CD4-positive, alpha-beta T cell (primary cell): ENCODE measurements at regions of chr2 and their contacts with region 1.

Region 1: GRCh38 chr2:197198890-197199289 is 111.7 kb downstream of the ANKRD44 start:
- DNase-seq: peak; percentile 75 to 98 (median 83)
- ATAC-seq: peak; percentile 82
- H3K4me3 ChIP-seq: peak overlapping the region; percentile 57
- H3K4me3 Mint-ChIP-seq: peak overlapping the region; percentile 89
- H3K27ac ChIP-seq: peak overlapping the region; percentile 77 to 84
- H3K27ac Mint-ChIP-seq: peak overlapping the region; percentile 98
- H3K4me1 ChIP-seq: peaks cover 70% of the 10 kb centered on the region
- H3K4me1 Mint-ChIP-seq: peaks cover 92% of the 10 kb centered on the region
- H3K27me3 ChIP-seq: no peaks in the 10 kb centered on the region
- H3K27me3 Mint-ChIP-seq: no peaks in the 10 kb centered on the region
- CTCF ChIP-seq: no peak

Region 2: DNA sequence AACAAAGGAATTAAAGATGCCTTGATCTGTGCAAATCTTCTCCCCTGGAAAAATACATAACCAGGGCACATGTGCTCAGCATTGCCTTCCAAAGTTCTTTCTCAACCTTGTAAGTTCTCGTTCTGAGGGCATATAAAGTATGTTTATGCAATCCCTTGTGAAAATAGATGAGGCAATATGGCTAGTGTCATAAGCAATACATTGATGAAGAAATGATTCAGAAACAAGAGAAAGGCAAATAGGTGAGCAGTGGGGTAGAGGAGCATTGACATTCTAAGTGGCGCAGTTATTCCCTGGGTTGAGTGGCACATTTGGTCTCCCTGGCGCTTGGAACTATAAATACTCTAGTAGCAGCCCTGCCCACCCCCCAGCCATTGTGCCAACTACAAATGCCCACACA is 215.0 kb before region 1 on chr2:
- CTCF ChIA-PET with region 1: no interaction called
- POLR2A ChIA-PET with region 1: no interaction called
- intact Hi-C with region 1: no loop called
- DNase-seq: peak in 2 of 14 experiments; percentile 24
- ATAC-seq: no peak
- H3K4me3 ChIP-seq: no peak overlapping the region
- H3K4me3 Mint-ChIP-seq: no peak overlapping the region
- H3K27ac ChIP-seq: no peak overlapping the region
- H3K27ac Mint-ChIP-seq: peak overlapping the region; percentile 47
- H3K4me1 ChIP-seq: peaks cover 3% of the 10 kb centered on the region
- H3K4me1 Mint-ChIP-seq: peaks cover 20% of the 10 kb centered on the region
- H3K27me3 ChIP-seq: no peaks in the 10 kb centered on the region
- H3K27me3 Mint-ChIP-seq: no peaks in the 10 kb centered on the region
- CTCF ChIP-seq: no peak

Region 3: GRCh38 chr2:197152451-197153228 is 46.2 kb before region 1 on chr2:
- CTCF ChIA-PET with region 1: interaction called, 4 read pairs
- POLR2A ChIA-PET with region 1: interaction called, 3 read pairs
- intact Hi-C with region 1: loop called in 1 of 2 experiments (anchors 5 kb)
- DNase-seq: peak in 9 of 14 experiments; percentile 16 to 66 (median 37)
- ATAC-seq: peak; percentile 93
- H3K4me3 ChIP-seq: no peak overlapping the region
- H3K4me3 Mint-ChIP-seq: peak overlapping the region; percentile 30
- H3K27ac ChIP-seq: peak overlapping the region; percentile 31 to 63
- H3K27ac Mint-ChIP-seq: peak overlapping the region; percentile 85
- H3K4me1 ChIP-seq: peaks cover 44% of the 10 kb centered on the region
- H3K4me1 Mint-ChIP-seq: peaks cover 85% of the 10 kb centered on the region
- H3K27me3 ChIP-seq: no peaks in the 10 kb centered on the region
- H3K27me3 Mint-ChIP-seq: no peaks in the 10 kb centered on the region
- CTCF ChIP-seq: peak; percentile 37

Region 4: DNA sequence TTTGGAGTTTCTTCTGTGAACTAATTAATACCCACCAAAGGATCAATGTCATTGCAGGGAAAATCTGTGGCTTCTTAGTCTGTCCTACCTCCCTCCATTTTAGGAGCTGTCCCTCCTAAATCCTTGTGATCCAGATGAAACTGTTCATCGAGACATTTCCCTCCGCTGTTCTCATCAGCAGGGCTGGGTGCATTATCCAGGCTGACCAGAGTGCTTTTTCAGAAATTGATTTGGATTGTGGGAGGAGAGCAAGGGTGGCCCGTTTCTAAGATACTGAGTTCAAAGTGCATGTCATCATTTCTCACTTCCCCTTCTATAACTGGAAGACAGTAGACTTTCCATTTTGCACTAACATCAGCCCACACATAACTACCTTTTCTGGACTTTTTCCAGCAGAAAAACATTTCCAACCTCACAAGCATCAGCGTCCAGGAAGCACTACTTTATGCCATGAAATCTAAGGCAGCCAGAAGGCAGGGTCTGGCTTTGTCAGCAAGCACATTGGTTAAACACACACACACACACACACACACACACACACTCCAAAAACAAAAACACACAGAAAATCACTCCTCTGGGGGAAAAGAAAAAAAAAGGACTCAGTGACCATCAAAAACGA is 17.6 kb after region 1 on chr2:
- CTCF ChIA-PET with region 1: interaction called, 3 read pairs
- POLR2A ChIA-PET with region 1: interaction called, 216 read pairs
- intact Hi-C with region 1: loop called (anchors 1 to 2 kb)
- DNase-seq: peak in 1 of 14 experiments; percentile 38
- ATAC-seq: peak; percentile 14
- H3K4me3 ChIP-seq: no peak overlapping the region
- H3K4me3 Mint-ChIP-seq: peak overlapping the region; percentile 63
- H3K27ac ChIP-seq: peak overlapping the region; percentile 33 to 62
- H3K27ac Mint-ChIP-seq: peak overlapping the region; percentile 98
- H3K4me1 ChIP-seq: peaks cover 57% of the 10 kb centered on the region
- H3K4me1 Mint-ChIP-seq: peaks cover 89% of the 10 kb centered on the region
- H3K27me3 ChIP-seq: no peaks in the 10 kb centered on the region
- H3K27me3 Mint-ChIP-seq: no peaks in the 10 kb centered on the region
- CTCF ChIP-seq: no peak

Region 5: DNA sequence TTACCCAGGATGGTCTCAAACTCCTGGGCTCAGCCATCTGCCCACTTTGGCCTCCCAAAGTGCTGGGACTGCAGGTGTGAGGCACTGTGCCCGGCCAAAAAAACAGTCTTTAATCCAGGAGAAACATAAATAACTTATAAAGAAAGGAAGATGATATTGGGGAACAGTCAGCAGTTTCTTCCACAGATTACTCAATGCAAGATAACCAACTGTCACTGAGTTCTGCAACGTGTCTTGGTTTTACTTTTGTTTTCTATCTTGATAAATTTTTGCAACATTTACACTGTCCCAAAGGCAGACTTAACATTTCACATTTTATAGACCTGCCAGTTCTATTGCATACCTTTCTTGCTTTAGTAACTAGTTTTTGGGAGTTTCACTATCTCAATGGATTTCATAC is 40.5 kb after region 1 on chr2:
- CTCF ChIA-PET with region 1: interaction called, 3 read pairs
- POLR2A ChIA-PET with region 1: interaction called, 50 read pairs
- intact Hi-C with region 1: loop called (anchors 1 to 5 kb)
- DNase-seq: peak in 3 of 14 experiments; percentile 49 to 65 (median 51)
- ATAC-seq: peak; percentile 32
- H3K4me3 ChIP-seq: peak overlapping the region; percentile 32
- H3K4me3 Mint-ChIP-seq: peak overlapping the region; percentile 88
- H3K27ac ChIP-seq: peak overlapping the region; percentile 74 to 75
- H3K27ac Mint-ChIP-seq: peak overlapping the region; percentile 91
- H3K4me1 ChIP-seq: peaks cover 77% of the 10 kb centered on the region
- H3K4me1 Mint-ChIP-seq: peaks cover 95% of the 10 kb centered on the region
- H3K27me3 ChIP-seq: no peaks in the 10 kb centered on the region
- H3K27me3 Mint-ChIP-seq: no peaks in the 10 kb centered on the region
- CTCF ChIP-seq: no peak

Region 6: GRCh38 chr2:197255543-197255942 is 56.7 kb after region 1 on chr2:
- CTCF ChIA-PET with region 1: interaction called, 3 read pairs
- POLR2A ChIA-PET with region 1: interaction called, 26 read pairs
- intact Hi-C with region 1: loop called in 1 of 2 experiments (anchors 1 kb)
- DNase-seq: peak; percentile 36 to 93 (median 56)
- ATAC-seq: peak; percentile 82
- H3K4me3 ChIP-seq: peak overlapping the region; percentile 13
- H3K4me3 Mint-ChIP-seq: peak overlapping the region; percentile 75
- H3K27ac ChIP-seq: peak overlapping the region; percentile 76 to 85
- H3K27ac Mint-ChIP-seq: peak overlapping the region; percentile 94
- H3K4me1 ChIP-seq: peaks cover 50% of the 10 kb centered on the region
- H3K4me1 Mint-ChIP-seq: peaks cover 89% of the 10 kb centered on the region
- H3K27me3 ChIP-seq: no peaks in the 10 kb centered on the region
- H3K27me3 Mint-ChIP-seq: no peaks in the 10 kb centered on the region
- CTCF ChIP-seq: no peak

Region 7: DNA sequence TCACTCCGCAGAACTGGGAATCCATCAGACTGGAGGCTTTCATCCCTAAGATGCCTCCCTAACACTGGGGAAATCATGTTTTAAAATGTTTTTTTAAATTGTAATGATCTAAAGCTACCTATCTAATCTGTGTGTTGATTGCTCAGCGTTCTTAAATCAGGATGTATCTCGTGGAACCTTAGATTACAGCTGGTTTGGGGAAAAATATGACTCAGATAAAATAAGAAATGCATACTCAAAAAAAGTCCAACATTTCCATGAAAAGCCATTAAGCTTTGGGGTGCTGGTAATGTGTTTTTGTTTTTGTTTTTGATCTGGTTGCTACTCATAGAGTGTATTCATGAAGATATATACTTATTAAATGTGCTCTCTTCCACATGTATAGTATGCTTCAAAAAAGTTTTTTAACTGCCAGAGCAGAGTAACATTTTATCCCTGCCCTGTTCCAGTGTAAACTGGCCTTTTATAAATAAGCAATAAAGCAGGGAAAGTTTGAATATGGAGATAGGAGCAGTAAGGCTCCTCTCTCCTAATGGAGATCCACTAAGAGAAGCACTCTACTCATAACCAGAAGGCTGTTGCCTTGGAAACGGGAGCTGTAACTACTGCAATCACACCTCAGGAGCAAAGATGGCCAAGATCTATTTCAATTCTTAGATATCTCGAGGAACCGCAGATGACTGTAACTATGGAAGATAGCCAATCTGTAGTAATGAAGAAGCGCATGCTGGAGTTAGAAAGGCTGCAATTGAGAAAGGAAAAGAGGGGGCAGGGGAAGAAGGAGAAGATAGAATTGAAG is 70.1 kb after region 1 on chr2:
- CTCF ChIA-PET with region 1: no interaction called
- POLR2A ChIA-PET with region 1: interaction called, 30 read pairs
- intact Hi-C with region 1: no loop called
- DNase-seq: peak in 4 of 14 experiments; percentile 36 to 74 (median 64)
- ATAC-seq: peak; percentile 66
- H3K4me3 ChIP-seq: no peak overlapping the region
- H3K4me3 Mint-ChIP-seq: peak overlapping the region; percentile 35
- H3K27ac ChIP-seq: peak overlapping the region; percentile 52 to 63
- H3K27ac Mint-ChIP-seq: peak overlapping the region; percentile 78
- H3K4me1 ChIP-seq: peaks cover 80% of the 10 kb centered on the region
- H3K4me1 Mint-ChIP-seq: peaks cover 89% of the 10 kb centered on the region
- H3K27me3 ChIP-seq: no peaks in the 10 kb centered on the region
- H3K27me3 Mint-ChIP-seq: no peaks in the 10 kb centered on the region
- CTCF ChIP-seq: no peak

Region 8: GRCh38 chr2:197322724-197323720 is 124.1 kb after region 1 on chr2:
- CTCF ChIA-PET with region 1: no interaction called
- POLR2A ChIA-PET with region 1: interaction called, 27 read pairs
- intact Hi-C with region 1: no loop called
- DNase-seq: peak in 4 of 14 experiments; percentile 45 to 51 (median 49)
- ATAC-seq: peak; percentile 84
- H3K4me3 ChIP-seq: peak overlapping the region; percentile 19
- H3K4me3 Mint-ChIP-seq: peak overlapping the region; percentile 62
- H3K27ac ChIP-seq: peak overlapping the region; percentile 63 to 69
- H3K27ac Mint-ChIP-seq: peak overlapping the region; percentile 94
- H3K4me1 ChIP-seq: peaks cover 42% of the 10 kb centered on the region
- H3K4me1 Mint-ChIP-seq: peaks cover 64% of the 10 kb centered on the region
- H3K27me3 ChIP-seq: no peaks in the 10 kb centered on the region
- H3K27me3 Mint-ChIP-seq: no peaks in the 10 kb centered on the region
- CTCF ChIP-seq: no peak